ENCODE measurements at regions of chr6 and their contacts with region 1.

Region 1: GRCh38 chr6:122461885-122462284 is 9.7 kb downstream of the SERINC1 start:
- DNase-seq: no peak
- ATAC-seq: no peak
- H3K4me3 Mint-ChIP-seq: no peak overlapping the region
- H3K27ac Mint-ChIP-seq: peak overlapping the region; percentile 17
- H3K4me1 Mint-ChIP-seq: peaks cover 85% of the 10 kb centered on the region
- H3K27me3 Mint-ChIP-seq: no peaks in the 10 kb centered on the region

Region 2: DNA sequence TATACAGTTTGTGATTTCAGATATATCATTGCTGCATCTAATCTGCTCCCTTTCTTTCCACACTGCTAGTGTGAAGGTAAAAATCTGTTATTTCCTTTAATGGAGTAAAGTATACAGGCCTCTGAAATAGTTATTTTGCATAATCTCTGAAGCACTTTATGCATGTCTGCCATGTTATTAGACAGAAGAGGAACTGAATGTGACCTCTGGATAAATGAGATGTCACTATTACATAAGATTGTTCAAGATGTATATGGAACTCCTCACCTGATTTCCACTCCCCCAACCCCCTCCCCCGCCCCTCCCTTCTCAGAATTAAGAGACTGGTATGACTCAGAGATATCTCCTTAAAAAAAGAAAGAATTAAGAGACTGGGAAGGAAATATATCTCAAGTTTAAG is 16.6 kb before region 1 on chr6:
- CTCF ChIA-PET with region 1: interaction called, 8 read pairs
- POLR2A ChIA-PET with region 1: no interaction called
- intact Hi-C with region 1: loop called in 1 of 2 experiments (anchors 2 kb)
- DNase-seq: no peak
- ATAC-seq: no peak
- H3K4me3 Mint-ChIP-seq: no peak overlapping the region
- H3K27ac Mint-ChIP-seq: no peak overlapping the region
- H3K4me1 Mint-ChIP-seq: peaks cover 10% of the 10 kb centered on the region
- H3K27me3 Mint-ChIP-seq: no peaks in the 10 kb centered on the region